ENCODE measurements at regions of chr16 and their contacts with region 1.

Region 1: DNA sequence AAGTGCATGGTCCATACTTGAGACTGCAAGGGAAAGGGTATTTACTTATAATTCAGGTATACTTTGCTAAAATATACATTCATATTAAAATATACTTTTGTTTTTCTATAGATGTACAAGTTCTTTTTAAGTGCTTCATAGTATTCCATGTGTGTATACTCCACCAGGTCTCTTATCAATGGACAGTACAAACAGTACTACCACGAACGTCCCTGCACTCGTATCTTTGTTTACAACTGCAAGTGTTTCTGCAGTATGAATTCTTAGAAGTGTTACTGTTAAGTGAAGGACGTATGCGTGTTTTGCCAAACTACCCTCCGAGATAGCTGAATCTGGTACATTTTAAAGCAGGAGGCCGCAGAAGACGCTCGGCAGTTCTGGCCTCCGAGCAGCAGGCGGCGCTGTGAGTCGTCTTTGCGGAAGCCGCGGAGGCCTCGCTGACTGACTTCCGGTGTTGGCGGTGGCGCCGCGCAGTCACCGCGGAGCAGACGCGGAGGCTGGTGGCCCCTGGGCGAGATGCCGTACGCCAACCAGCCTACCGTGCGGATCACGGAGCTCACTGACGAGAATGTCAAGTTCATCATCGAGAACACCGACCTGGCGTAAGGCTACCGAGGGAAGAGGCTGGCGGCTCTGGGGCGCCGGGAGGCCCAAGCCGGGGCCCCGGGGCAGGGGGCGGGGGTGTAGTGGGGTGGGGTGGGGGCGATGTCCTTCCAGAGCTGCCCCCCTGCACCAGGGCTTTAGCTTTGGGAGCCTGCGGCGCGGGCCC is at the start of gene POLR2C:
- DNase-seq: peak; percentile 37
- ATAC-seq: peak; percentile 98
- H3K4me3 ChIP-seq: peak within 1 kb of the TSS; percentile 98
- H3K27ac ChIP-seq: peak within 1 kb of the TSS; percentile 64
- H3K4me1 ChIP-seq: peaks cover 7% of the 10 kb centered on the region
- H3K27me3 ChIP-seq: no peaks in the 10 kb centered on the region
- CTCF ChIP-seq: peak; percentile 96 to 99 (median 96); a peak in 5 of 6 replicates
- EP300 ChIP-seq: no peak
- POLR2A ChIP-seq: peak; percentile 100
- RAD21 ChIP-seq: peak; percentile 36
- polyA plus RNA-seq, gene POLR2C: 26.9 to 40.2 TPM

Region 2: GRCh38 chr16:57447186-57447962 is 15.0 kb before region 1 on chr16 and contains the starts of genes CIAPIN1 and COQ9:
- CTCF ChIA-PET with region 1: interaction called, 42 read pairs
- POLR2A ChIA-PET with region 1: interaction called, 14 read pairs
- RAD21 ChIA-PET with region 1: interaction called, 6 read pairs
- SMC1A ChIA-PET with region 1: interaction called, 3 read pairs
- in situ Hi-C with region 1: no loop called
- intact Hi-C with region 1: no loop called
- DNase-seq: peak; percentile 74
- ATAC-seq: peak; percentile 99
- H3K4me3 ChIP-seq: peak within 1 kb of the TSS; percentile 97
- H3K27ac ChIP-seq: peak within 1 kb of the TSS; percentile 88
- H3K4me1 ChIP-seq: peaks cover 6% of the 10 kb centered on the region; the same call in 1 of the 2 replicates
- H3K27me3 ChIP-seq: no peaks in the 10 kb centered on the region
- CTCF ChIP-seq: no peak
- EP300 ChIP-seq: 0 out of 4 replicates have a peak, but pooled peaks of 1 of the 2 experiments have one; percentile 8
- POLR2A ChIP-seq: peak; percentile 92
- RAD21 ChIP-seq: no peak
- polyA plus RNA-seq, gene CIAPIN1: 118 to 150 TPM
- polyA plus RNA-seq, gene COQ9: 24.1 to 32.7 TPM

Region 3: DNA sequence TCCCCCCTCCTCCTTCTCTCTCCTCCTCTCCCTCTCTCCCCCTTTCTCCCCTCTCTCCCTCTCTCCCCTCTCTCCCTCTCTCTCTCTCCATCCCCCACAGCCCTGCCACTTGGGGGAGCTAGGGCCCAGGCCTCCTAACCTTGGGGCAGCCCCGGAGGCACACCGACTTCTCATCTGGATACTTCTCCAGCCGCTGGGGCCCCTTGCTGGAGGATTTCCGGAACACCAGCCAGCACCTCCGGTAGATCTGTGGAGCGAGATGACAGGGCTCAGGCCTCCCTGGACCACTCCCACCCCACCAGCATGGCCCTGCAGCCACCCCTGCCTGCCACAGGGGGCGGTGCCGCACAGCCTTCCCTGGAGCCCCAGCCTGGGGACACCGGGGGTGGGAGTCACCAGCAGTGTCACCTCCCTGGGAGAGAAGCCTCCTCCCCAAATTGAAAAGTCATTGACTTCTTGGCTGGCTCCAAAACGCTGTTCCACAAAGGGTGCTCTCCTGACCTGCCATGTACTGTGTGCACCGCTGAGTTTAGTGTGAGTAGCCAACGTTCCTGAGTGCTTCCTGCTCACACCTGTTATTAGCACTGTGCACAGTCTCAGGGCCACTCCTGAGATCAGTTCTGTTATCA is 13.4 kb after region 1 on chr16:
- CTCF ChIA-PET with region 1: interaction called, 20 read pairs
- POLR2A ChIA-PET with region 1: no interaction called
- RAD21 ChIA-PET with region 1: no interaction called
- SMC1A ChIA-PET with region 1: interaction called, 3 read pairs
- in situ Hi-C with region 1: no loop called
- intact Hi-C with region 1: no loop called
- DNase-seq: no peak
- ATAC-seq: peak; percentile 96
- H3K4me3 ChIP-seq: no peak overlapping the region
- H3K27ac ChIP-seq: no peak overlapping the region
- H3K4me1 ChIP-seq: peaks cover 16% of the 10 kb centered on the region
- H3K27me3 ChIP-seq: no peaks in the 10 kb centered on the region
- CTCF ChIP-seq: peak; percentile 43 to 75 (median 73)
- EP300 ChIP-seq: no peak
- POLR2A ChIP-seq: no peak
- RAD21 ChIP-seq: peak; percentile 54